ENCODE measurements at regions of chr1 and their contacts with region 1.

Region 1: GRCh38 chr1:180533266-180533987 is 25.3 kb upstream of the OVAAL start:
- DNase-seq: peak; percentile 85 to 93 (median 88)
- ATAC-seq: peak; percentile 96
- H3K4me3 ChIP-seq: no peak overlapping the region
- H3K27ac ChIP-seq: no peak overlapping the region
- H3K4me1 ChIP-seq: peaks cover 0 to 10% of the 10 kb centered on the region in 2 experiments; a peak in 2 of 5 replicates
- H3K27me3 ChIP-seq: no peaks in the 10 kb centered on the region
- CTCF ChIP-seq: peak; percentile 93 to 98 (median 97)
- EP300 ChIP-seq: 0 out of 2 replicates have a peak, but pooled peaks have one; percentile 2
- POLR2A ChIP-seq: no peak
- RAD21 ChIP-seq: peak; percentile 99

Region 2: DNA sequence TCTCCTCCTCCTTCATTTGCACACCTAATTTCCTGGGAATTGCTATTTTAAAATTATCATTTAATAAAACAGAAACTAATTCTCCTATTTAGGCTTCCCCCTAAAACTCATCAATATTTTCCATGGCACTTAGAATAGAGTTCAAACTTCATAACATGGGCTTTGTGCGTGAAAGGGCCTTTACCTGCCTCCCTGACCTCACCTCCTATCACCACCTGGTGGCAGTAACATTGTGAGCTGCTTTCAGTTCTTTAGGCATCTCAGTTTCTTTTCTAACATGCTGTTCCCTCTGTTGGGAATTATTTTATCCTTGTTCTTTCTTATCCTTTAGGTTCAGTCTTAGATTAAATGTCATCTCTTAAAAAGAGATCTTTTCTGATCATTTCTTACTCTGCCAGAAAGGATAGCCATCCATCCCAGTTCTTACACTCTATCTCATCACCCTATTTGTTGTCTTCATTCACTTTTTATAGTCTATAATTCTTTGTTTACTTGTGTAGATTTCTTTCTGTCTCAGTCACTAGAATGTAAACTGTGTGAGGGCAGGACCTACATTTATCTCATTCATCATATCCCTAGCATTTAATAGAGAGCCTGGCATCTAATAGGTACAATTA is 245.5 kb after region 1 on chr1:
- CTCF ChIA-PET with region 1: no interaction called
- POLR2A ChIA-PET with region 1: no interaction called
- in situ Hi-C with region 1: no loop called
- intact Hi-C with region 1: loop called (anchors 2 kb)
- DNase-seq: peak; percentile 23 to 40 (median 31)
- ATAC-seq: peak; percentile 82
- H3K4me3 ChIP-seq: no peak overlapping the region
- H3K27ac ChIP-seq: no peak overlapping the region
- H3K4me1 ChIP-seq: no peaks in the 10 kb centered on the region
- H3K27me3 ChIP-seq: no peaks in the 10 kb centered on the region
- CTCF ChIP-seq: peak; percentile 46 to 55 (median 46); a peak in 4 of 6 replicates
- EP300 ChIP-seq: no peak
- POLR2A ChIP-seq: no peak
- RAD21 ChIP-seq: peak in 1 of 2 experiments; percentile 55; a peak in 2 of 4 replicates

Region 3: GRCh38 chr1:180863158-180863775 is 329.8 kb after region 1 on chr1:
- CTCF ChIA-PET with region 1: interaction called, 54 read pairs
- POLR2A ChIA-PET with region 1: interaction called, 4 read pairs
- in situ Hi-C with region 1: loop called (anchors 5 kb)
- intact Hi-C with region 1: loop called (anchors 1 kb)
- DNase-seq: peak; percentile 30 to 74 (median 41)
- ATAC-seq: peak; percentile 80
- H3K4me3 ChIP-seq: no peak overlapping the region
- H3K27ac ChIP-seq: no peak overlapping the region
- H3K4me1 ChIP-seq: no peaks in the 10 kb centered on the region; a peak in 1 of 5 replicates
- H3K27me3 ChIP-seq: no peaks in the 10 kb centered on the region
- CTCF ChIP-seq: peak; percentile 55 to 94 (median 60); a peak in 5 of 6 replicates
- EP300 ChIP-seq: no peak
- POLR2A ChIP-seq: no peak
- RAD21 ChIP-seq: peak; percentile 98 to 99